ENCODE measurements at regions of chrX and their contacts with region 1.

Region 1: GRCh38 chrX:119852382-119853353 is at the start of gene UPF3B:
- DNase-seq: peak; percentile 97
- H3K4me3 Mint-ChIP-seq: peak within 1 kb of the TSS; percentile 99
- H3K27ac Mint-ChIP-seq: peak within 1 kb of the TSS; percentile 97
- H3K4me1 Mint-ChIP-seq: peaks cover 11% of the 10 kb centered on the region
- H3K27me3 Mint-ChIP-seq: no peaks in the 10 kb centered on the region
- total RNA-seq, gene UPF3B: 12.4 and 12.6 TPM in 2 replicates

Region 2: DNA sequence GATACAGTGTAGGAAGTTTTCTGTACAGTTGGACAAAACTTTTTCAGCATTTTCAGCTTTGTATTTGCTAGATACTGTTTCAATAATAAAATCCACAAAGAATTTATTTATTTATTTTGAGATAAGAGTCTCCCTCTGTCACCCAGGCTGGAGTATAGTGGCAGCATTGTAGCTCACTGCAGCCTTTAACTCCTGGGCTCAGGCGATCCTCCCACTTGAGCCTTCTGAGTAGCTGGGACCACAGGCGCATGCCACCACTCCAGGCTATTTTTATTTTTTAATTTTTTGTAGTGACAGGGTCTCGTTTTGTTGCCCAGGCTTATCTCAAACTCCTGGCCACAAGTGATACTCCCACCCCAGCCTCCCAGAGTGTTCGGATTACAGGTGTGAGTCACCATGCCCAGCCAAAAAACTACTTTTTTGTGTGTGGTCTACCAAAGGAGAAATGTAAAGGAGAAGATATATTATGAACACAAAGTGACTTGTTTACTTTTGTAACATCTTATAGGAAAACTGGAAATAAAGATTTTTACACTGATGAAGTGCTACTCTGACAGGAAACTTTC is 107.3 kb before region 1 on chrX:
- intact Hi-C with region 1: no loop called
- DNase-seq: no peak
- H3K4me3 Mint-ChIP-seq: no peak overlapping the region
- H3K27ac Mint-ChIP-seq: no peak overlapping the region
- H3K4me1 Mint-ChIP-seq: no peaks in the 10 kb centered on the region
- H3K27me3 Mint-ChIP-seq: no peaks in the 10 kb centered on the region

Region 3: DNA sequence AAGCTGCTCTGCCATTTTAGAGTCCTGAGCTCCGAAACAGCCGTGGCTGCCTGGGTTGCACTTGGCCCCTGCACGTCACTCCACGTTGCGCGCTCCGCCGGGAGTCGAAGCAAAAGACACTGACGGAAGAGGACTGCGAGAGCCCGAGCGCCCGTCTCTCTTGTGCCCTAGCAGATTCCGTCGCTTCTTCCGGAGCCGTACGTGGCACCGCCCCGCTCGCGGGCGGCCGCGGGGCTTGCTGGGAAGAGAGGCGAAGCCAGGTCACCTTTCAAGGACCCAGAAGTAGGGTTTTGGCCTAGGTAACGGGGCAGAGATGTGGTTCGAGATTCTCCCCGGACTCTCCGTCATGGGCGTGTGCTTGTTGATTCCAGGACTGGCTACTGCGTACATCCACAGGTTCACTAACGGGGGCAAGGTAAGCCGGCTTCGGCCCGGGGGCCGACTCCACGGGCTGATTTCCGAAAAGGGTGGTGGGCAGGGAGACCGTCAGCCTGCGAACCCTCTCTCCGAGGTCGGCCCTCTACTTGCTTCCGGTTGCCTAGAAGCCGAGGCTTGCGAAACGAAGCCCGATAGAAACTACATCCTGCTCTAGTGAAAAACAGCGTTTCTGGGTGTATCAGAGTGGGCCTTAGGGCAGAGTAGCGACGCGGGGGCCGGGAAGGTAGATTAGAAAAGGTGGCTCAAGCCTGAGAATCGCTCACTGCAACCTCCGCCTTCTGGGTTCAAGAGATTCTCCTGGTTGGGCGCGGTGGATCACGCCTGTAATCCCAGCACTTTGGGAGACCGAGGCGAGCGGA is 19.1 kb after region 1 on chrX and contains the starts of genes NDUFA1 and RNF113A:
- intact Hi-C with region 1: loop called (anchors 1 kb)
- DNase-seq: peak; percentile 96
- H3K4me3 Mint-ChIP-seq: peak within 1 kb of the TSS; percentile 98
- H3K27ac Mint-ChIP-seq: peak within 1 kb of the TSS; percentile 99
- H3K4me1 Mint-ChIP-seq: peaks cover 5% of the 10 kb centered on the region
- H3K27me3 Mint-ChIP-seq: no peaks in the 10 kb centered on the region
- total RNA-seq, gene NDUFA1: 75.1 and 79.0 TPM in 2 replicates
- total RNA-seq, gene RNF113A: 25.2 and 26.7 TPM in 2 replicates